Dorsolateral prefrontal cortex (tissue), 120 donors: ENCODE measurements at regions of chr10 and their contacts with region 1.

Region 1: GRCh38 chr10:17617031-17617911 is at the start of gene HACD1:
- DNase-seq: peak; percentile 54 to 80 (median 60)
- H3K4me3 ChIP-seq: peak within 1 kb of the TSS; percentile 64 to 98 (median 84)
- H3K27ac ChIP-seq: peak within 1 kb of the TSS in 52 of 59 donors; percentile 10 to 90 (median 72)
- H3K27me3 ChIP-seq: no peaks in the 10 kb centered on the region
- CTCF ChIP-seq: peak in 44 of 56 donors; percentile 11 to 68 (median 34)
- total RNA-seq, gene HACD1: 3.5 to 13.4 (median 8.0) TPM

Region 2: GRCh38 chr10:17742918-17743317 is 125.6 kb after region 1 on chr10:
- intact Hi-C with region 1: loop called in 1 of 2 experiments (anchors 5 kb)
- DNase-seq: peak in 8 of 10 donors; percentile 36 to 54 (median 46)
- H3K4me3 ChIP-seq: peak overlapping the region in 21 of 59 donors; percentile 2 to 47 (median 21)
- H3K27ac ChIP-seq: no peak overlapping the region
- H3K27me3 ChIP-seq: no peaks in the 10 kb centered on the region
- CTCF ChIP-seq: peak; percentile 72 to 98 (median 87)